Sigmoid colon (tissue), 7 donors: ENCODE measurements at regions of chr3 and their contacts with region 1.

Region 1: GRCh38 chr3:66336333-66336766 is 115.5 kb downstream of the SLC25A26 start:
- DNase-seq: no peak
- H3K4me3 ChIP-seq: no peak overlapping the region
- H3K27ac ChIP-seq: no peak overlapping the region
- H3K4me1 ChIP-seq: peaks cover 0 to 11% (median 2%) of the 10 kb centered on the region in 4 donors
- H3K27me3 ChIP-seq: no peaks in the 10 kb centered on the region
- CTCF ChIP-seq: no peak
- EP300 ChIP-seq: no peak
- POLR2A ChIP-seq: no peak

Region 2: GRCh38 chr3:66302288-66302687 is 34.1 kb before region 1 on chr3:
- intact Hi-C with region 1: loop called (anchors 5 kb)
- DNase-seq: no peak
- H3K4me3 ChIP-seq: no peak overlapping the region
- H3K27ac ChIP-seq: no peak overlapping the region
- H3K4me1 ChIP-seq: peaks cover 0 to 36% (median 17%) of the 10 kb centered on the region in 4 donors
- H3K27me3 ChIP-seq: no peaks in the 10 kb centered on the region
- CTCF ChIP-seq: no peak
- EP300 ChIP-seq: no peak
- POLR2A ChIP-seq: no peak

Region 3: GRCh38 chr3:66537735-66538134 is 201.4 kb after region 1 on chr3:
- intact Hi-C with region 1: no loop called
- DNase-seq: no peak
- H3K4me3 ChIP-seq: no peak overlapping the region
- H3K27ac ChIP-seq: no peak overlapping the region
- H3K4me1 ChIP-seq: no peaks in the 10 kb centered on the region
- H3K27me3 ChIP-seq: no peaks in the 10 kb centered on the region
- CTCF ChIP-seq: no peak
- EP300 ChIP-seq: no peak
- POLR2A ChIP-seq: no peak